Spleen (tissue), 13 donors: ENCODE measurements at regions of chr18 and their contacts with region 1.

Region 1: GRCh38 chr18:30658306-30658705 is 384.2 kb downstream of the DSC3 start:
- DNase-seq: no peak
- H3K4me3 ChIP-seq: no peak overlapping the region
- H3K27ac ChIP-seq: no peak overlapping the region
- H3K4me1 ChIP-seq: no peaks in the 10 kb centered on the region
- H3K27me3 ChIP-seq: no peaks in the 10 kb centered on the region
- CTCF ChIP-seq: no peak
- POLR2A ChIP-seq: no peak

Region 2: DNA sequence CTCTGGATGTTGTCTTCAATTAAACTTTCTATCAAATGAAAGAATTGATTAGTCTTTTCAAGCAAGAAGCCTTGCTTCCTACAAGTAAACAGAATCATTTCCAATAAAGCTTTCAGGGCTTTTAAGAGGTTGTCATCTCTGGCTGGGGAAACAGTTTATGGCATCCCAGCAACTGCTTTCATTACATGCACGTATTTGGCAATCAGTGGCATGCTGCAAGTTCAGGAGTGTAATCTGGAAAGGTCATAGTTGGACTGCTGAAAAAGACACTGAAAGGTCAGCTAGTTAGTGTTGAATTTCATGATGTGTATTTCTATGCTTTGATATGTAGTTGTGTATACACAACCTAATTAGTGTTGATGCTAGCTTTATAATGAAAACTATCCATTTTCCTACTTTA is 51.3 kb after region 1 on chr18:
- intact Hi-C with region 1: loop called (anchors 5 kb)
- DNase-seq: no peak
- H3K4me3 ChIP-seq: no peak overlapping the region
- H3K27ac ChIP-seq: no peak overlapping the region
- H3K4me1 ChIP-seq: no peaks in the 10 kb centered on the region
- H3K27me3 ChIP-seq: no peaks in the 10 kb centered on the region
- CTCF ChIP-seq: no peak
- POLR2A ChIP-seq: no peak

Region 3: GRCh38 chr18:30870466-30870865 is 212.2 kb after region 1 on chr18:
- intact Hi-C with region 1: no loop called
- DNase-seq: no peak
- H3K4me3 ChIP-seq: no peak overlapping the region
- H3K27ac ChIP-seq: no peak overlapping the region
- H3K4me1 ChIP-seq: no peaks in the 10 kb centered on the region
- H3K27me3 ChIP-seq: no peaks in the 10 kb centered on the region
- CTCF ChIP-seq: no peak
- POLR2A ChIP-seq: no peak

Region 4: GRCh38 chr18:30929718-30930117 is 271.4 kb after region 1 on chr18:
- intact Hi-C with region 1: no loop called
- DNase-seq: no peak
- H3K4me3 ChIP-seq: no peak overlapping the region
- H3K27ac ChIP-seq: no peak overlapping the region
- H3K4me1 ChIP-seq: no peaks in the 10 kb centered on the region
- H3K27me3 ChIP-seq: no peaks in the 10 kb centered on the region
- CTCF ChIP-seq: no peak
- POLR2A ChIP-seq: no peak

Region 5: GRCh38 chr18:30957066-30957465 is 298.8 kb after region 1 on chr18:
- intact Hi-C with region 1: no loop called
- DNase-seq: no peak
- H3K4me3 ChIP-seq: no peak overlapping the region
- H3K27ac ChIP-seq: no peak overlapping the region
- H3K4me1 ChIP-seq: no peaks in the 10 kb centered on the region
- H3K27me3 ChIP-seq: no peaks in the 10 kb centered on the region
- CTCF ChIP-seq: no peak
- POLR2A ChIP-seq: no peak